Aorta (tissue), 5 donors: ENCODE measurements at regions of chr1 and their contacts with region 1.

Region 1: DNA sequence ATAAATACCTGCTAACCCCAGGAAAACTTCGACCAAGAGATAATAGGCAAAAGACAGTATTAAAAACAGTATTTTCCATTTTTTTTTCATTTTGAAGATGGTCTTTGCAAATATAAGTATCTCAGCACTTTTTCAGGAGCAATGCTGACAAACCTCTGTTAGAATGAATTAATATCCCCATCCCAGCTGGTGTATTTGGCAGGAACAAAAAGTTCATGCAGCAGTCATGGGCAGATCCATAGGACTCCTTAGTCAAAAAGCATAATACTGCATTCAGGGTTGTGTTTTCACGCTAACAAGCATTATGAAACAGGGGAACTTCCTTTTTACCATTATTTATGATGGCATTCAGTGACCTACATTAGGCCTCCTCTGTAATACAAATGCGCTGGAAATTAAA is 344.0 kb downstream of the ST6GALNAC3 start:
- DNase-seq: no peak
- ATAC-seq: no peak
- H3K4me3 ChIP-seq: no peak overlapping the region
- H3K27ac ChIP-seq: no peak overlapping the region
- H3K4me1 ChIP-seq: peaks cover 0 to 11% of the 10 kb centered on the region in 2 donors
- H3K27me3 ChIP-seq: no peaks in the 10 kb centered on the region

Region 2: DNA sequence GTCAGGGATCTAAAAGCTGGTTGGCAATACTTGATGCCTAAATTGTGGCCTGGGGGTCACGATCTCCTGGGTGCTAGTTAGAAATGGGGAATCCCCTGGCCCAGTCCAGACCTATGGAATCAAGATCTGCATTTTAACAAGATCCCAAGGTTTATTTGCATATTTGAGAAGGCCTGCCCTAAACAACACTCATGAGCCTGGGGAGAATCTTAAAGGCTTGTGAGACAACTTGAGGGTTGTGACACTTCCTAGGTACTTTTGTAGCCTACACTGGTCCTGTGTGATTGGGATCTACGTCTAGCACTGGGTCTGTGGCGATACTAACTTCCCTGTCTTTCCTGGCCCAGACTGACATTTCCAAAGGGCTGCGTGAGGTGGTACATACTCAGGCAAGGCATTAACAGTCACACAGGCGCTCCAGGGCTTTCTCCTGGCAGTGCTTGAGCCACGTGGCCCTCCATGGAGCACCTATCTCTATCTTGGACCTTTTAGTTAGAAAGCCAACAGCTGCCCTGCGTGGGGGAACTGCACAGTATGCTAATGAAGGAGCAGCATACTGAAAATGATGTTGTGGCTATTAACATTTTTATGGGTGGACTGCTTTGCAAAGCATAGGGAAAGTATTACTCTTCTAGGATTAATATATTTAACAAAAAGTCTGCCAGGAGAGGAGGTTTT is 80.8 kb before region 1 on chr1:
- intact Hi-C with region 1: loop called in 1 of 2 experiments (anchors 2 kb)
- DNase-seq: no peak
- ATAC-seq: no peak
- H3K4me3 ChIP-seq: no peak overlapping the region
- H3K27ac ChIP-seq: no peak overlapping the region
- H3K4me1 ChIP-seq: peaks cover 0 to 3% of the 10 kb centered on the region in 2 donors
- H3K27me3 ChIP-seq: no peaks in the 10 kb centered on the region

Region 3: GRCh38 chr1:76388261-76388660 is 30.3 kb before region 1 on chr1:
- intact Hi-C with region 1: loop called in 1 of 2 experiments (anchors 5 kb)
- DNase-seq: no peak
- ATAC-seq: no peak
- H3K4me3 ChIP-seq: no peak overlapping the region
- H3K27ac ChIP-seq: no peak overlapping the region
- H3K4me1 ChIP-seq: no peaks in the 10 kb centered on the region
- H3K27me3 ChIP-seq: no peaks in the 10 kb centered on the region